Transverse colon (tissue), 4 donors: ENCODE measurements at regions of chr18 and their contacts with region 1.

Region 1: GRCh38 chr18:73842795-73843394 is 304.7 kb downstream of the FBXO15 start:
- DNase-seq: peak; percentile 25
- H3K4me3 ChIP-seq: no peak overlapping the region
- H3K27ac ChIP-seq: no peak overlapping the region
- H3K4me1 ChIP-seq: peaks cover 0 to 4% (median 0%) of the 10 kb centered on the region in 4 donors
- H3K27me3 ChIP-seq: peaks cover 3% of the 10 kb centered on the region
- CTCF ChIP-seq: peak; percentile 68 to 94 (median 87)
- EP300 ChIP-seq: no peak
- POLR2A ChIP-seq: no peak

Region 2: DNA sequence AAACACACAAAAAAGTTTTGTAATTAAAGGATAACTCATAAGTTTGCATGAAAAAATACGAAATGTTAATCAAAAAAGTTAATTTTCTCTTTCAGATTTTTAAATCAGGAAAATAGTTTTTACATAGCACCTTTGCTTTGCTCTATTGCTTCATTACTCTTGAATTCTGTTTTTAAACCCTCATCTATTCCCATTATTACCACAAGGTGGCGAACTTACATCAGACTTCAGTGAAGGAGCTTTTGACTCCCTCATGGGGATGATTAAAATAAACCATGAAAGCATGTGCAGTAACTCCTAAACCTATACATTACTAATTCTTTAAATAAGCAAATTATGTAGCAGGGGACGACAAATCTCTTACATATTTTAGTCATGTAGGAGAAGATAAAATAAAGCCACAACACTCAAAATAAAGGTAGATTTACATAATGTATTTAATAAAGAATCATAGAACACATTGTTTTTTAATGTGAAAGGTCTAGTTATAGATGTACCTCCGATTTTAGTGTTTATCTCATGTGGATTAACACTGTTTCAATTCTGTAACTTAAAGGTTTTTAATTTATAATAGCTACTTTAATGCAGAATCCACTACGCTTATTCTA is 1080.3 kb before region 1 on chr18:
- in situ Hi-C with region 1: loop called in 3 of 4 experiments (anchors 25 kb)
- intact Hi-C with region 1: no loop called
- DNase-seq: no peak
- H3K4me3 ChIP-seq: no peak overlapping the region
- H3K27ac ChIP-seq: no peak overlapping the region
- H3K4me1 ChIP-seq: no peaks in the 10 kb centered on the region
- H3K27me3 ChIP-seq: no peaks in the 10 kb centered on the region
- CTCF ChIP-seq: peak; percentile 64 to 77 (median 66)
- EP300 ChIP-seq: no peak
- POLR2A ChIP-seq: no peak

Region 3: GRCh38 chr18:73945130-73945792 is 102.4 kb after region 1 on chr18:
- in situ Hi-C with region 1: loop called in 1 of 4 experiments (anchors 25 kb)
- intact Hi-C with region 1: no loop called
- DNase-seq: no peak
- H3K4me3 ChIP-seq: no peak overlapping the region
- H3K27ac ChIP-seq: no peak overlapping the region
- H3K4me1 ChIP-seq: no peaks in the 10 kb centered on the region
- H3K27me3 ChIP-seq: no peaks in the 10 kb centered on the region
- CTCF ChIP-seq: no peak
- EP300 ChIP-seq: no peak
- POLR2A ChIP-seq: no peak